Activated T-helper 1 cell treated with anti-CD3 and anti-CD28 coated beads, Interleukin-12 subunit alpha, Interleukin-12 subunit beta, Interleukin-2, Interleukin-4 antibody, amounts not matched to agents 30 ng/mL and 10 ng/mL and 1 ng/mL, durations not matched to agents 14 hours and 24 hours and 36 hours (primary cell): ENCODE measurements at regions of chr11 and their contacts with region 1.

Region 1: GRCh38 chr11:63888170-63889086 is 28.5 kb downstream of the RCOR2 start:
- DNase-seq: peak; percentile 57
- H3K4me3 Mint-ChIP-seq: peak overlapping the region; percentile 86
- H3K27ac Mint-ChIP-seq: peak overlapping the region; percentile 83
- H3K4me1 Mint-ChIP-seq: peaks cover 77% of the 10 kb centered on the region
- H3K27me3 Mint-ChIP-seq: no peaks in the 10 kb centered on the region

Region 2: GRCh38 chr11:63813035-63813562 is 75.3 kb before region 1 on chr11 and contains the start of gene SPINDOC:
- intact Hi-C with region 1: loop called (anchors 1 kb)
- DNase-seq: peak; percentile 78
- H3K4me3 Mint-ChIP-seq: peak within 1 kb of the TSS; percentile 88
- H3K27ac Mint-ChIP-seq: peak within 1 kb of the TSS; percentile 55
- H3K4me1 Mint-ChIP-seq: peaks cover 34% of the 10 kb centered on the region
- H3K27me3 Mint-ChIP-seq: no peaks in the 10 kb centered on the region
- total RNA-seq, gene SPINDOC: 60.0 and 64.3 TPM in 2 replicates